ENCODE measurements at regions of chr10 and their contacts with region 1.

Region 1: GRCh38 chr10:21724695-21725367 is 190.8 kb downstream of the MLLT10 start:
- DNase-seq: peak; percentile 39 to 65
- H3K4me3 ChIP-seq: no peak overlapping the region
- H3K4me3 Mint-ChIP-seq: no peak overlapping the region
- H3K27ac Mint-ChIP-seq: no peak overlapping the region
- H3K4me1 ChIP-seq: peaks cover 36% of the 10 kb centered on the region
- H3K4me1 Mint-ChIP-seq: peaks cover 35% of the 10 kb centered on the region
- H3K27me3 ChIP-seq: no peaks in the 10 kb centered on the region
- H3K27me3 Mint-ChIP-seq: no peaks in the 10 kb centered on the region
- CTCF ChIP-seq: no peak

Region 2: GRCh38 chr10:21525367-21526183 is 199.3 kb before region 1 on chr10 and contains the start of gene SKIDA1:
- CTCF ChIA-PET with region 1: no interaction called
- POLR2A ChIA-PET with region 1: no interaction called
- intact Hi-C with region 1: loop called (anchors 1 kb)
- DNase-seq: peak; percentile 96 to 97
- H3K4me3 ChIP-seq: peak within 1 kb of the TSS; percentile 70
- H3K4me3 Mint-ChIP-seq: peak within 1 kb of the TSS; percentile 88
- H3K27ac Mint-ChIP-seq: peak within 1 kb of the TSS; percentile 98
- H3K4me1 ChIP-seq: peaks cover 30% of the 10 kb centered on the region
- H3K4me1 Mint-ChIP-seq: peaks cover 31% of the 10 kb centered on the region
- H3K27me3 ChIP-seq: no peaks in the 10 kb centered on the region
- H3K27me3 Mint-ChIP-seq: no peaks in the 10 kb centered on the region
- CTCF ChIP-seq: no peak
- total RNA-seq, gene SKIDA1: 5.7 and 6.3 TPM in 2 replicates

Region 3: DNA sequence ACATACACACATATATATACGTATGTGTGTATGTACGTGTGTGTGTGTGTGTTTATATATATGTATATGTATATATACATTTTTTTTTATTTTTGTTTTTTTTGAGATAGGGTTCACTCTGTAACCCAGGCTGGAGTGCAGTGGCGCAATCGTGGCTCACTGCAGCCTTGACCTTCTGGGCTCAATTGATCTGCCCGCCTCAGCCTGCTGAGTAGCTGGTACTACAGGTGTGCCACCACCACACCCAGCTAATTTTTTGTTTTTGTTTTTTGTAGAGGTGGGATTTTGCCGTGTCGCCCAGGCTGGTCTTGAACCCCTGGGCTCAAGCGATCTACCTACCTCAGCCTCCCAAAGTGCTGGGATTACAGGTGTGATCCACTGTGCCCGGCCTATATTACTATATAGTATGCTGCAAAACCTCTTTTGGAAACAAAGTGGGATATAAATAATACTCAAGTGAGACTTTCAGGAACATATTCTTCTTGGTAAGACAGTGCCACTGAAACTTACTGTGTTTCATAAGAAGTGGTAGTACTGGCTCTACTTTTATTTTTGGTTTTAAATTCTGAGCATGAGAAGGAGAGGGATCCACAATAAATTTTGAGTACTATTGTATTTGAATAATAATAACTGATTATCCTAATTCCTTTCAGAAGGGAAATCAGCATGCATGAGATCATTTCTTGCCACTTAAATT is 139.8 kb before region 1 on chr10:
- CTCF ChIA-PET with region 1: no interaction called
- POLR2A ChIA-PET with region 1: no interaction called
- intact Hi-C with region 1: no loop called
- DNase-seq: no peak
- H3K4me3 ChIP-seq: no peak overlapping the region
- H3K4me3 Mint-ChIP-seq: no peak overlapping the region
- H3K27ac Mint-ChIP-seq: no peak overlapping the region
- H3K4me1 ChIP-seq: peaks cover 9% of the 10 kb centered on the region; the same call in 1 of the 2 replicates
- H3K4me1 Mint-ChIP-seq: peaks cover 24% of the 10 kb centered on the region
- H3K27me3 ChIP-seq: no peaks in the 10 kb centered on the region
- H3K27me3 Mint-ChIP-seq: no peaks in the 10 kb centered on the region
- CTCF ChIP-seq: no peak

Region 4: DNA sequence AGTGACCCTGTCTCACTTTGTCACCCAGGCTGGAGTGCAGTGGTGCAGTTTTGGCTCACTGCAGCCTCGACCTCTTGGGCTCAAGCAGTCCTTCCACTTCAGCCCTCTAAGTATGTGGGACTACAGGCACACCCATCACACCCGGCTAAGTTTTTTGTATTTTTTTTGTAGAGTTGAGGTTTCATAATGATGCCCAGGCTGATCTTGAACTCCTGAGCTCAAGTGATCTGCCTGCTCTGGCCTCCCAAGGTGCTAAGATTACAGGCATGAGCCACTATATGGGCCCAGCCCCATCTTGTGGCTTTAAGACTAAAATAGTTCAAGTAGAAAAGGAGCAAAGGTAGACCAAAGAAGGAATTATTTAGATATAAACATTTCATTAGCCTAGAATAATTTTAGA is 125.2 kb before region 1 on chr10:
- CTCF ChIA-PET with region 1: no interaction called
- POLR2A ChIA-PET with region 1: no interaction called
- intact Hi-C with region 1: no loop called
- DNase-seq: no peak
- H3K4me3 ChIP-seq: no peak overlapping the region
- H3K4me3 Mint-ChIP-seq: no peak overlapping the region
- H3K27ac Mint-ChIP-seq: no peak overlapping the region
- H3K4me1 ChIP-seq: no peaks in the 10 kb centered on the region
- H3K4me1 Mint-ChIP-seq: peaks cover 14% of the 10 kb centered on the region
- H3K27me3 ChIP-seq: no peaks in the 10 kb centered on the region
- H3K27me3 Mint-ChIP-seq: no peaks in the 10 kb centered on the region
- CTCF ChIP-seq: no peak

Region 5: DNA sequence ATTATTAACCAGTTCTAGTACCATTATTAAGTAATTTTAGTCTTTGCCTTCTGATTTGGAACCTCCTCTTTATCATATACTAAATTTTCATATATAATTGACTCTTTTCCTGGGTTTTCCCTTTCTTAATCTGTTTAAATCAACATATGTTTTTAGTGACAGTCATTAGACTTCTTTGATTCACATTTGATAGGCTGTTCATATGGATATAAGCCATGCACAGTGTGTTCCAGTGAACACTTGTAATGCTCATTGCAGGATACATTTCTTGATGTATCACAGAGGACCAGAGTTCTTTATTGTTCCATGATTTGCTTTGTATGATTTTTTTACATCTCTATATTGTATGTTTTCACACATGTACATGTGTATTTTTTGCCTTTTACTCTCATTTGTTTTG is 76.8 kb before region 1 on chr10:
- CTCF ChIA-PET with region 1: no interaction called
- POLR2A ChIA-PET with region 1: no interaction called
- intact Hi-C with region 1: no loop called
- DNase-seq: no peak
- H3K4me3 ChIP-seq: no peak overlapping the region
- H3K4me3 Mint-ChIP-seq: no peak overlapping the region
- H3K27ac Mint-ChIP-seq: no peak overlapping the region
- H3K4me1 ChIP-seq: no peaks in the 10 kb centered on the region
- H3K4me1 Mint-ChIP-seq: peaks cover 8% of the 10 kb centered on the region
- H3K27me3 ChIP-seq: no peaks in the 10 kb centered on the region
- H3K27me3 Mint-ChIP-seq: no peaks in the 10 kb centered on the region
- CTCF ChIP-seq: no peak

Region 6: DNA sequence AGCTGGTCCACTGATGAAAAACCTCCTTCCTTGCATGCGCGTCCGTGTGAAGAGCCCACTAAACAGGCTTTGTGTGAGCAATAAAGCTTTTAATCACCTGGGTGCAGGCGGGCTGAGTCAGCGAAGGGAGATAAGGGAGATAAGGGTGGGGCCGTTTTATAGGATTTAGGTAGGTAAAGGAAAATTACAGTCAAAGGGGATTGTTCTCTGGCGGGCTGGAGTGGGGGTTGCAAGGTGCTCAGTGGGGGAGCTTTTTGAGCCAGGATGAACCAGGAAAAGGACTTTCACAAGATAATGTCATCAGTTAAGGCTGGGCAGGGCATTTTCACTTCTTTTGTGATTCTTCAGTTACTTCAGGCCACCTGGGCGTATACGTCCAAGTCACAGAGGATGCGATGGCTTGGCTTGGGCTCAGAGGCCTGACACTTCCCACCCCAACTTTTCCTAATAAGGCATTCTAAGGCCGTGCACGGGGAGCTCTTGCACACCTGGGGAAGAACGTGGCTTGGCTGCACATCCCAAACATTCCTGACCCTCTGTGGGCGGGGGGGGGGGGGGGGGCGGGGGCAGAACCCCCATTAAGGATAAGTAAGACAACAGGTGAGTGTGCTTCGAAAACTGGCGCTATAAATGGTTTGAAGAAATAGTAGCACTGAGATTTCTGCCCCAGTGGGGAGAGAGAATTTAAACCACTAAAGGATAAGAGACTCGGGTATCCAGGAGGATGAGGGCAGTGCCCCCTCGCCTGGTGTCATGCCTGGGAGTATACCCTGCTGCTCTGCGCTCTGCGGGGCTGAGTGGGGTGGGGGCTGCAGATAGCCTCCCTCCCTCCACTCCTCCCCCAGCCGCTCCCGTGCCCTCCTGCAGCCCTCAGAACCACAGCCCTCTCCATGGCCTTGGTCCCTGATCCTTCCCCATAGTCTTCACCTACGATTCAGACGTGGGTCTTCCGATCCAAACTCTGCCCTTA is 26.8 kb after region 1 on chr10:
- CTCF ChIA-PET with region 1: interaction called, 3 read pairs
- POLR2A ChIA-PET with region 1: no interaction called
- intact Hi-C with region 1: loop called (anchors 1 kb)
- DNase-seq: peak; percentile 73 to 87
- H3K4me3 ChIP-seq: no peak overlapping the region
- H3K4me3 Mint-ChIP-seq: peak overlapping the region; percentile 53
- H3K27ac Mint-ChIP-seq: peak overlapping the region; percentile 60
- H3K4me1 ChIP-seq: peaks cover 36% of the 10 kb centered on the region
- H3K4me1 Mint-ChIP-seq: peaks cover 27% of the 10 kb centered on the region
- H3K27me3 ChIP-seq: no peaks in the 10 kb centered on the region
- H3K27me3 Mint-ChIP-seq: no peaks in the 10 kb centered on the region
- CTCF ChIP-seq: no peak

Region 7: GRCh38 chr10:21797984-21798765 is 73.3 kb after region 1 on chr10:
- CTCF ChIA-PET with region 1: no interaction called
- POLR2A ChIA-PET with region 1: no interaction called
- intact Hi-C with region 1: no loop called
- DNase-seq: no peak
- H3K4me3 ChIP-seq: no peak overlapping the region
- H3K4me3 Mint-ChIP-seq: no peak overlapping the region
- H3K27ac Mint-ChIP-seq: no peak overlapping the region
- H3K4me1 ChIP-seq: no peaks in the 10 kb centered on the region
- H3K4me1 Mint-ChIP-seq: no peaks in the 10 kb centered on the region
- H3K27me3 ChIP-seq: no peaks in the 10 kb centered on the region
- H3K27me3 Mint-ChIP-seq: no peaks in the 10 kb centered on the region
- CTCF ChIP-seq: no peak

Measured in Caco-2 (cell line).